Heart right ventricle (tissue), 16 donors: ENCODE measurements at regions of chr10 and their contacts with region 1.

Region 1: DNA sequence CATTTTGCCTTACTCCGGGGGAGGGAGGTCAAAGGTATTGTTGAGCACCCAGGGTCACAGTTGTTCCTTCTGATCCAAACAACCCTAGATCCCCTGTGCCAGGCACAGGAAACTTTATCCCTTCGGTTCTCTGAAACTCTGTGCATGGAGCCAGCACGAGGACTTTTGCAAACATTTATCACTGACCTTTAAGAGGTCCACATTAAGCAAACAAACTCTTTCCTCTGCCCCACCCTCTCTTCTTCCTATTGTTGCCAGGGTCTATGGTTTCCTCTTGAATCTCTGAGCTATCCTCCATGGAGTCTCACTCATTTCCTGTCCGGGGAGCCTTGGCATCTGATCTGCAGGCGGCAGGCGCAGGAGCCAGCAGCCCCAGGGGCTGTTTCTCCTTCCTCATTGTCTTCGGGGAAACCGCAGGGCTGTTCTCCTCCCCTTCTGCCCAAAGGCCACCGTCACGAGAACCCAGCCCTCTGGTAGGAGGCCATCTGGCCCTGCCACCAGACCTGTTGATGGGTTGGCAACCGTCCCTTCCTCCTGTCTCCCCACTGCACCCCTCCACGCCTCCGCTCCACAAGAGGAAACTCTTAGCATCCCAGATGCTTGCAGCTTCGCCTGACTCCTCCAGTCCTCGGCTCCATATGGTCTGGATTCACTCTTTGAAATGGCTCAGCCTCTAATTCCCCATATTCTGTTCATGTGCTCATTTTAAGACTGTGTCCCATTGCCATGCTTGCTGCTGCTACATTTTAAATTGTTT is 327.3 kb upstream of the NRP1 start:
- DNase-seq: peak; percentile 66 to 67
- ATAC-seq: peak; percentile 78 to 91 (median 82)
- H3K4me3 ChIP-seq: peak overlapping the region in 1 of 10 donors; percentile 15
- H3K27ac ChIP-seq: peak overlapping the region in 7 of 10 donors; percentile 32 to 73 (median 51)
- H3K4me1 ChIP-seq: peaks cover 0 to 44% (median 20%) of the 10 kb centered on the region in 9 donors
- H3K27me3 ChIP-seq: no peaks in the 10 kb centered on the region
- CTCF ChIP-seq: no peak

Region 2: GRCh38 chr10:33715303-33715975 is 53.7 kb after region 1 on chr10:
- intact Hi-C with region 1: loop called in 1 of 10 experiments (anchors 5 kb)
- DNase-seq: peak; percentile 9 to 55
- ATAC-seq: peak in 6 of 8 donors; percentile 30 to 78 (median 64)
- H3K4me3 ChIP-seq: no peak overlapping the region
- H3K27ac ChIP-seq: peak overlapping the region in 1 of 10 donors; percentile 38
- H3K4me1 ChIP-seq: peaks cover 1 to 48% (median 30%) of the 10 kb centered on the region in 9 donors
- H3K27me3 ChIP-seq: no peaks in the 10 kb centered on the region
- CTCF ChIP-seq: no peak